AG04449 (cell line): ENCODE measurements at regions of chr3 and their contacts with region 1.

Region 1: DNA sequence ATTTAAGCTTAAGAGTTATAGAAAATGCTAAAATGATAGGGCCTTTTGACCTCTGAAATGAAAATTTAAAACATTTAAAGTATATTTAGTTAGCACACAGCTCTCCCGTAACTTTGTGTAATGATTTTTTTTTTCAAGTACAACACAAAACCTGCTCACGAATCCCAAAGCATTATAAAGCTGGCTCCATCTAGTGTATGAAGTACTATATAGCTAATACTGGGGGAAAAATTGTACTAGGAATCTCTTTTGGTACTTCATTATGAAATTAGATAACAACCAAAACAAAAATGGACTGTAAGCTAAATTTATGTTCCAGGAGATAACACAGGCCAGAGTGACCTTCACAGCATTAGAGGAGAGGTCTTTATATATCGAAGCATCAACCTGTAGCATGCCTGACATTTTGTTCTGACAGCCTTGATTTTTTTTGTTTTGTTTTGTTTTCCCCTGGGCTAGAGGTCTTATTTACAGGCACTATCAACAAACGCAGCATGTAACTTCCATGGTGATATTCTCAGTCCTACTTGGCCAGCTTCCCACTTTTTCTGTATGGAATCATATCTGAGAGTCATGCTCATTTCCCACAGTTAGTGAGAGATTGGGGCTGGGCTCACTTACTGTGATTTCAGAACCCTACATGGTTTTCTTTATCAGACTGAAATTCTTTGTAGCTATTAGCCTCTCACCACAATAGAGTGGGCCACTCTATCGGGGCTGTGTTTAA is 116.3 kb downstream of the MITF start:
- DNase-seq: no peak
- H3K4me3 ChIP-seq: no peak overlapping the region
- CTCF ChIP-seq: peak; percentile 39

Region 2: GRCh38 chr3:69675786-69676530 is 179.6 kb before region 1 on chr3:
- CTCF ChIA-PET with region 1: no interaction called
- POLR2A ChIA-PET with region 1: no interaction called
- DNase-seq: no peak
- H3K4me3 ChIP-seq: no peak overlapping the region
- CTCF ChIP-seq: no peak

Region 3: DNA sequence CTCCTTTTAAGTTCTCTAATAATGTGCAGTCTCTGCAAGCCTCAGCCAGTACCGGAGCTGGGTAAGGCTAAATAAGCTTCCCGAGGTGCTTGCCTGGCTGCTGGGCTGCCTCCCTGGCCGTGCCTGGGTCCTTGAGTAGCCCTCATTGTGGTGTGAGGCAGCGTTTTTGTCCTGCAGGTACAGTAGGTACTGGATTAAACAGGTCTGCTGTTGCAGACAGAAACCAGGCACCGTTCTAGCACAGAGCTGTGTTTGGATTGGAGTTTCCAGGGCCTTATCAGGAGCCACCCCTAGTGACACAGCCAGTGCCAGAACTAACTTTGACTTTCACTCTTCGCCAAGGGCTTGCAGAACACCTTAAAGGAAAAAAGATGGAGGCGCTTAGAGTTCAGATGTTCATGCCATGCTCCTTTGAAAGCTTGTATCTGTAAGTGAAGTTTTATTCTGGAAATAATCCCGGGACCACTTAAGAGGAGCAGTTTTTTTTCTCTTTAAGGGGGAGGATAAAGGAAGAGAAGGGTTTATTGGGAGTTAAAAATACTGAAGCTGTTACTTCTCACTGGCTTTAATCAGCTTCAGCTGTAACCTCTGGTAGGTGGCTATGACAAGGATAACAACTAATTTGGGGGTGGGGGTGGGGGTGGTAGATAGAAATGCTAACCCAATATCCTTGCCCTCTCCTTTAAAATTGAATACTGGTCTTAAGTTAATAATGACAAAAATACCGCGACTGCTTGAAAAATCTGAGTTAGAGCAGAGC is 10.5 kb after region 1 on chr3:
- CTCF ChIA-PET with region 1: interaction called, 15 read pairs
- POLR2A ChIA-PET with region 1: no interaction called
- DNase-seq: no peak
- H3K4me3 ChIP-seq: no peak overlapping the region
- CTCF ChIP-seq: no peak

Region 4: GRCh38 chr3:69879051-69879450 is 23.5 kb after region 1 on chr3:
- CTCF ChIA-PET with region 1: no interaction called
- POLR2A ChIA-PET with region 1: no interaction called
- DNase-seq: no peak
- H3K4me3 ChIP-seq: no peak overlapping the region
- CTCF ChIP-seq: no peak